ENCODE measurements at regions of chr1 and their contacts with region 1.

Region 1: GRCh38 chr1:206663832-206664652 is 20.7 kb upstream of the MAPKAPK2 start:
- DNase-seq: no peak
- H3K4me3 ChIP-seq: no peak overlapping the region; the same call in 1 of the 2 replicates
- CTCF ChIP-seq: peak; percentile 66

Region 2: GRCh38 chr1:206479183-206480125 is 184.6 kb before region 1 on chr1:
- CTCF ChIA-PET with region 1: interaction called, 50 read pairs
- POLR2A ChIA-PET with region 1: no interaction called
- DNase-seq: no peak
- H3K4me3 ChIP-seq: no peak overlapping the region
- CTCF ChIP-seq: peak; percentile 70

Region 3: GRCh38 chr1:206544562-206545257 is 119.3 kb before region 1 on chr1:
- CTCF ChIA-PET with region 1: interaction called, 31 read pairs
- POLR2A ChIA-PET with region 1: no interaction called
- DNase-seq: no peak
- H3K4me3 ChIP-seq: no peak overlapping the region
- CTCF ChIP-seq: peak; percentile 88

Region 4: GRCh38 chr1:206600527-206600926 is 63.5 kb before region 1 on chr1:
- CTCF ChIA-PET with region 1: interaction called, 265 read pairs
- POLR2A ChIA-PET with region 1: no interaction called
- DNase-seq: no peak
- H3K4me3 ChIP-seq: no peak overlapping the region
- CTCF ChIP-seq: no peak

Region 5: GRCh38 chr1:206684478-206685333 is 20.7 kb after region 1 on chr1 and contains the start of gene MAPKAPK2:
- CTCF ChIA-PET with region 1: interaction called, 35 read pairs
- POLR2A ChIA-PET with region 1: no interaction called
- DNase-seq: no peak
- H3K4me3 ChIP-seq: peak within 1 kb of the TSS; percentile 81
- CTCF ChIP-seq: no peak

Region 6: DNA sequence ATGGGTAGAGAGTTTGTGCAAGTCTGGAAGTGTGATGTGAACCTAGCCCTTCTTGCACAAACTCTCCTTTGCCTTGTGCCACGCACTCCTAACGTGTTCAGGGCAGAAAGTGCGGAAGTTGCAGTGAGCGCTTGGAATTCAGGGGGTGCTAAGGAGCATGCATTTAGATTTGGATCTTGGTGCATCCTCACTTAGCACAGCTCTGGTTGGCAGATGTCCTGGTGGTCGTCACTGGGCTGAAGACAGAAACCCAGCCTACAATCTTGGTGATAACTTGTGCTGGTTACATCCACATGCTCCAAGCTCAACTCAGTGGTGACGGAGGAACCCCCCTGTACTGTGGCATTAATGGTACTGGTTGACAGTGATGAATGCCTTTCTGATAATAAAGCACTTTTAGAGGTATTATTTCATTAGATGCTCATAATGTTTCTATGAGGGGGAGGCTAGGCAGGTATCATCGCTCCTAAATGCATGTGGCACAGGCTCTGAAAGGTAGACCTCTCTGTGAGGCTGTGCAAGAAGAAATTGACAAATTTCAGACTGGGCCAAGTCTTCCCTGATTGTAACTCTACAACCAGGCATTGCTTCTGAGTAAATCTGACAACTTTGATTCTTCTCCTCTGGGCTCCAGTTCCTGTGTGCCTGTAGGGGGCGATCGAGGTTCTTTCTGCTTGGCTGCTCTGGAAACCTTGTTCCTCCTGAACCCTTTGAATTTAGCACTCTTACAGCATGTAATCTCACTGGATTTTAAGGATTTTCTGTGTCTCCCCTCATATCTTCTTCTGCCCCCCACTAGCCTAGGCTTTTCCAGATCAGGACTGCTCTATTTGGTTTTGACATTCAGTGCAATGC is 61.3 kb after region 1 on chr1:
- CTCF ChIA-PET with region 1: interaction called, 11 read pairs
- POLR2A ChIA-PET with region 1: no interaction called
- DNase-seq: no peak
- H3K4me3 ChIP-seq: no peak overlapping the region
- CTCF ChIP-seq: peak; percentile 74

Region 7: DNA sequence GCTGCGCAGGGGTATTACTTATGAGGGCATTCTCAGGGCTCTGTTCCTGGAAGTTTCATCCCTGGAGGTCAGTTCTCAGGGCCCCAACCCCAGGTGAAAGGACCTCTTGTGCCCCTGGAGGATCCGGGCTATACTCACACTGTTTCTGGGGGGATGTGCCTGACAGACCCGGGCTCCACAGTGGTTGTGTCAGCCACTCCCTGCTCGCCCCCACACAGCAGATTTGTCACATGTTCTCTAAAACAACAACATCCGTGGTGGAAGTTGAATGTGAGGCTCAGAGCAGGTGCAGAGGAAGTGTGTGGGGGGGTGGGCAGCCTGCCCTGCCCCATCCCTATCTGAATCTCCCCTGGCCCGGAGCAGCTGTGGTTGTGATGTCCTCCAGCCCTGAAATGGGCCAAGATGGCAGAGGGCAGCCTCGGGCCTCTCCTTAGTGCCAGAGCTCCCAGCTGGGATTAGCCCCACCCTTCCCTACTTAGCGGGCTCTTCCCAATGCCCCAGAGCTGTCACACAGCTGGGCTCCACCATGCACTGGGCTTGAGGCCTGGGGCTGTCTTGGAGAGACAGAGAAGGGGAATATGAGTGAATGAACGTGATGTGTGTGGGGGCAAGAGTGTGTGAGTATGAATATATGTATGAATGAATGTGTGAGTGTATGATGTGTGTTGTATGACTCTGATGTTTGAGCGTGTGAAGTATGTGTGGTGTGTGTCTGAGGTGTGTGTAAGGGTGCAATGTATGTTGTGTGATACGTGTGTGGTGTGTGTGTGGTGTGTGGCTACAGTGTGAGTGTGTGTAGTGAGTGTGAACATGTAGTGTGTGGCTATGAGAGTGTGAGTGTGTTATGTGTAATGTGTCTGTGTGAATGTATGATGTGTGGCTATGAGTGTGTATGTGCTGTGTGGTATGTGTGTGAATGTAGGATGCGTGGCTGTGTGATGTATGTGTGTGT is 259.2 kb after region 1 on chr1:
- CTCF ChIA-PET with region 1: no interaction called
- POLR2A ChIA-PET with region 1: no interaction called
- DNase-seq: no peak
- H3K4me3 ChIP-seq: no peak overlapping the region
- CTCF ChIP-seq: no peak

Region 8: GRCh38 chr1:207145401-207146058 is 481.5 kb after region 1 on chr1:
- CTCF ChIA-PET with region 1: no interaction called
- POLR2A ChIA-PET with region 1: no interaction called
- DNase-seq: no peak
- H3K4me3 ChIP-seq: no peak overlapping the region
- CTCF ChIP-seq: no peak

Measured in AG04449 (cell line).